ENCODE measurements at regions of chr10 and their contacts with region 1.

Region 1: DNA sequence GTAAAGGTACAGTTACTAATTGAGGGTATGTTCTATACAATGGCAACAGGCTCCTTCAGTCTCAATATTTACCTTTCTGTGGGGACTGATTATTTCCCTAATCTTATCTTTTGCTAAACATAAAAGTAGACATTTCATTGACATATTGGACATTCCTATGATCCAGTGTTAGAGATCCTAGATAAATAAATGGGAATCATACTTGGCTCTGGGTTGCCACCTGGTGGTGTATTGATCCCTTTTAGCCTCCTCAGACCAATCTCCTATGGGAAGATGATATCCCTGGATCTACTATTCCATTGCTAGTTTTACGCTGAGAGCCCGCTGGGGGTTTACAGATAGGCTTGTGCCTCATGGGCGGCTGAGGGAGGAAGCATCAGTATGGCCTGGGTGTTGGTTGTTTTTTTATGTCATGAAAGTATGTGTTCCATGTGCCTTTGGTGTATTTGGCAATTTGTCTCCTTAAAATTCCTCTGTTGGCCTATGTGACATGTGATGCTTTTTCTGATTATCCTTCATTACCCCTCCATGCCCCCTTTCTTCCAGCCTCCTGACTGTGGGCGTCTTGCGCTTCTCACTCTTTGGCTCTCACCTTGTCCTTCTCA is 18.8 kb downstream of the CELF2 start:
- DNase-seq: peak; percentile 62

Region 2: DNA sequence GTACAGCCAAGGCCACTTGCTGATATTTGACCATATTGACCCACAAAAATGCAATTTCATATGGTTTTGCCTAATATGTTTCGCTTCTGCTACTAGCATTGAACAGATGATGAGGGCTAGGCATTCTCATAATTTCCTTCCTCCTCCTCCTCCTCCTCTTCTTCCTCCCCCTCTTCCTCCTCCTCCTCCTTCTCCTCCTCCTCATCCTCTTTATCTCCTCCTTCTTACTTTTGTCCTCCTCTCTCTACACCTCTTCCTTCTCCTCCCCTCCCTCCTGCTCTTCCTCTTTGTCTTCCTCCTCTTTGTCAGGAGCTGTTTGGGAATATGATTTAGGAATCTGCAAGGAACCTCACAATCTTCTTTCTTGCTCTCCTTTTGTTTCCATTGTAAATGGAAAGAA is 152.8 kb before region 1 on chr10:
- CTCF ChIA-PET with region 1: no interaction called
- POLR2A ChIA-PET with region 1: no interaction called
- DNase-seq: no peak

Region 3: DNA sequence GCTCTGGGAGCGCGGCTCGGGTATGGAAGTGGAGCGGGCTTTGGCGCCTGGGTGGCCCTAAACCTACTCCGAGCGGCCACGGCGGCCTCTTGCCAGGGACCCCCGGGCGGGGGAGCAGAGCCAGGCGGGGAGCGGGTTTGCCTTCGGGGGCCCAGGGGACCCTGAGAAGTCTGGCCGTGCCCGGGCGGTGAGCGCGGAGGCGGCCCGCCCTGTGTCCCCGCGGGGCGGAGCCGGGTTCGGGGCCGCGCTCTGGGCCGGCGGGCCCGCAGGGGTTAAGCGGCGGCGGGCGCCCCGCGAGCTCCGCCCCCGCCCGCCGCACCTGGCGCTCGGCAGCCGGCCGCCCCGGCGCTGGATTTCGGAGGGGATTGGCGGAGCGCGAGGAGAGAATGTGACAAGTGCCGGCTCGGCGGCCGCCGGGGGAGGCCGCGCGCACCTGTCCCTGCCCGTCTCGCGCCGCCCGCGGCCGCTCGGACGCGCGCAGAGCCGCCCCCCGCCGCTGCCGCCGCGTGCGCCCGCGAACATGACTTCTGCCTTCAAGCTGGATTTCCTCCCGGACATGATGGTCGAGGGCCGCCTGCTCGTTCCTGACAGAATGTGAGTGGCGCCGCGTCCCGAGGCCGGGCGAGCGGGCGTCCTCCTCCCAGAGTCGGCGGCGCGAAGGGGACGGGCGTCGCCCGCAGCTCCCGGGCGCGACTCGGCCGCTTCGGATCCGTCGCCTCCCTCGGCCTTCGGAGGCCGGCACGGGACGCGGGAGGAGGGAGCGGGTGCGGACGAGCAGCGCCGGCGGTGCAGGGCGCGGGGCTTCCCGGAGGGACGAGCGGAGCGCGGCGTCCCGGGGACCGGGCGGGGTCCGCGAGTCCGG is 18.7 kb before region 1 on chr10 and contains the start of gene CELF2:
- CTCF ChIA-PET with region 1: no interaction called
- POLR2A ChIA-PET with region 1: interaction called, 14 read pairs
- DNase-seq: peak; percentile 55